ENCODE measurements at regions of chr10 and their contacts with region 1.

Region 1: DNA sequence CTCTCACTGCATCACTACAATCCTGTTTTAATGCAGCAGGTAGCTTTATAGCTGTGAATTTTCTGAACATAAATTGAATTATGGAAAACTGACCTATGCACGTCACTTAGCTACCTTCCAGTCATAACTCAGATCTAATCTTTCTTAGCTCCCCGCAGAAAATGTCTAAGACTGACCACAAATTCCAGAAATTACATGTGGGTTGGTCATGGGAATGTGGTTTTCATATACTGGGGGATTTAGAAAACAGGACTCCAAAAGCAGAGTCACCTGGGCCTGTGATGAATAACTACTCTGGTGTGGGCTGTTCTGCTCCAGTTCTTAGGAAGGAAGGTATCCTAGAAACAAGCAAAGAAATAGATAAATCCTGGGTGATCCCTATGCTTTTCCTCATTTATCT is 178.4 kb upstream of the LRRTM3 start:
- DNase-seq: peak; percentile 100
- ATAC-seq: peak; percentile 89
- H3K4me3 ChIP-seq: no peak overlapping the region
- H3K27ac ChIP-seq: peak overlapping the region; percentile 68
- H3K4me1 ChIP-seq: peaks cover 26% of the 10 kb centered on the region
- H3K27me3 ChIP-seq: no peaks in the 10 kb centered on the region
- CTCF ChIP-seq: no peak

Region 2: GRCh38 chr10:66277481-66277880 is 470.0 kb before region 1 on chr10:
- CTCF ChIA-PET with region 1: no interaction called
- POLR2A ChIA-PET with region 1: no interaction called
- intact Hi-C with region 1: loop called (anchors 5 kb)
- DNase-seq: peak; percentile 47
- ATAC-seq: no peak
- H3K4me3 ChIP-seq: no peak overlapping the region
- H3K27ac ChIP-seq: no peak overlapping the region
- H3K4me1 ChIP-seq: peaks cover 10% of the 10 kb centered on the region
- H3K27me3 ChIP-seq: no peaks in the 10 kb centered on the region
- CTCF ChIP-seq: peak; percentile 87

Region 3: DNA sequence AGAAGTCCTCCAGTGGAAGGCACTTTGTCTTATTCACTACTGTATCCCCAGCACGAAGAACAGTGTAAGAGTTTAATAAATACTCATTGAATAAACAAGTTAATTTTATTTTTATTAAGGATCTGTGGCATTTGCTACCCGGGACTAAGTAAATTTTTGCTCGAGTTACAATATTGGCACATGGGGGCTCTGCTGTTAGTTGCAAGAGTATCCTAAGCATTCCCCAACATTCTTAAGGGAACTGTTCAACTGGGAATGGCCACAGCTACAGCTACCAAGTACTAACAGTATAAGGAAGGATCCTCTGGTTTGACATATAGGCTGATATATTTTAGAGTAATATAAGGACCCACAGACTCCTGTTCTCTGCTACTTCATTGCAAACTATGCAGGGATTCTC is 169.7 kb after region 1 on chr10:
- CTCF ChIA-PET with region 1: no interaction called
- POLR2A ChIA-PET with region 1: no interaction called
- intact Hi-C with region 1: loop called (anchors 2 kb)
- DNase-seq: no peak
- ATAC-seq: no peak
- H3K4me3 ChIP-seq: no peak overlapping the region
- H3K27ac ChIP-seq: no peak overlapping the region
- H3K4me1 ChIP-seq: peaks cover 20% of the 10 kb centered on the region
- H3K27me3 ChIP-seq: no peaks in the 10 kb centered on the region
- CTCF ChIP-seq: peak; percentile 56; the same call in 1 of the 2 replicates

Region 4: DNA sequence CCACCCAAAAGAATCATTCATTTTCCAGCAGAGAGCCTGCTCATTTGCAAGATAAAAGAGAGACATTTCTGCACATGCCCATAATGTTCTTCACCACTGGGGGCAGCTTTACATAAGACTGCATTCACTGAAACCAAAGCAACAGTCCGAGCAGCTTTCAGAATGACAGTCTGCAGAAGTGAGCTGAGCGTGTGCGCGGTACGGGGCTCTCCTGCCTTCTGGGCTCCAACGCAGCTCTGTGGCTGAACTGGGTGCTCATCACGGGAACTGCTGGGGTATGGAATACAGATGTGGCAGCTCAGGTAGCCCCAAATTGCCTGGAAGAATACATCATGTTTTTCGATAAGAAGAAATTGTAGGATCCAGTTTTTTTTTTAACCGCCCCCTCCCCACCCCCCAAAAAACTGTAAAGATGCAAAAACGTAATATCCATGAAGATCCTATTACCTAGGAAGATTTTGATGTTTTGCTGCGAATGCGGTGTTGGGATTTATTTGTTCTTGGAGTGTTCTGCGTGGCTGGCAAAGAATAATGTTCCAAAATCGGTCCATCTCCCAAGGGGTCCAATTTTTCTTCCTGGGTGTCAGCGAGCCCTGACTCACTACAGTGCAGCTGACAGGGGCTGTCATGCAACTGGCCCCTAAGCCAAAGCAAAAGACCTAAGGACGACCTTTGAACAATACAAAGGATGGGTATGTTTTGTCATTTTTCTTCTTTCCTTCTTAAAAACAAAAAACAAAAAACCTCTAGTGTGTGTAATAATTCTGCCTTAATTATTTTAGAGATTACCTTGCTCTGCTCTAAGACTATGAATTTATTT is 178.7 kb after region 1 on chr10 and contains the start of gene LRRTM3:
- CTCF ChIA-PET with region 1: interaction called, 17 read pairs
- POLR2A ChIA-PET with region 1: no interaction called
- intact Hi-C with region 1: loop called (anchors 1 kb)
- DNase-seq: peak; percentile 99
- ATAC-seq: peak; percentile 99
- H3K4me3 ChIP-seq: peak within 1 kb of the TSS; percentile 42
- H3K27ac ChIP-seq: no peak within 1 kb of the TSS
- H3K4me1 ChIP-seq: peaks cover 18% of the 10 kb centered on the region
- H3K27me3 ChIP-seq: peaks cover 6% of the 10 kb centered on the region; the same call in 1 of the 2 replicates
- CTCF ChIP-seq: peak; percentile 99
- total RNA-seq, gene LRRTM3: 0.12 and 0.15 TPM in 2 replicates

Measured in PC-3 (cell line).